Cardiac septum (tissue), 1 donor: ENCODE measurements at regions of chr2 and their contacts with region 1.

Region 1: DNA sequence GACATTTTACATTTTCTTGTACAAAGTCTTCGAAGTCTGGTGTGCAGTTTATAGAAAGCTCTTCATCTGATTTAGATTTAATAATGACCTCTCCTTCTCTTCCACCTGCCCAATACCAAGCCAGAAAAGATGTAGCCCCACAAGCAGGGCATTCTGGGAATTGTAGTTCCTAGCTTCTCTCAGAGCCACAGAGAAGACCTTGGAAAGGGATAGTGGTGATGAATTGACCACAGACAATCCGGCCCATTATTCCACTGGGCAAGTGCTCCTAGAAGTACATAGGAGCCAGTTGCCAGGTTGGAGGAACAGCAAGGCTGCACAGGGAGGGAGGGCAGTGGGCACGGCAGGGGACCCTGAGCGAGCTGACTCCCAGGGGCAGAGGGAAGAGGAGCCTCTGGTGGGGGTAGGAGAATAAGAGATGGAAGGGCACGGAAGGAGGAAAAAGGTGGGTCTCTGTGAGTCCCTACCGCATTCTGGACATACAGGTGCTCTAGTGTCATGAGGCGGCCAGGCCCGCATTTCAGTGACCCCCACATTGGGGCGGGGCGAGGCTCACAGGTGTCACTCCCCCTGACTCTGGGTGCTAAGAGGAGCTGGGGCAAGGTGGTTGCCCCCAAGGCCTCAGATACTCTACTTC is 152.5 kb upstream of the HAAO start:
- DNase-seq: no peak

Region 2: GRCh38 chr2:42404676-42405075 is 540.2 kb before region 1 on chr2:
- intact Hi-C with region 1: no loop called
- DNase-seq: no peak

Region 3: DNA sequence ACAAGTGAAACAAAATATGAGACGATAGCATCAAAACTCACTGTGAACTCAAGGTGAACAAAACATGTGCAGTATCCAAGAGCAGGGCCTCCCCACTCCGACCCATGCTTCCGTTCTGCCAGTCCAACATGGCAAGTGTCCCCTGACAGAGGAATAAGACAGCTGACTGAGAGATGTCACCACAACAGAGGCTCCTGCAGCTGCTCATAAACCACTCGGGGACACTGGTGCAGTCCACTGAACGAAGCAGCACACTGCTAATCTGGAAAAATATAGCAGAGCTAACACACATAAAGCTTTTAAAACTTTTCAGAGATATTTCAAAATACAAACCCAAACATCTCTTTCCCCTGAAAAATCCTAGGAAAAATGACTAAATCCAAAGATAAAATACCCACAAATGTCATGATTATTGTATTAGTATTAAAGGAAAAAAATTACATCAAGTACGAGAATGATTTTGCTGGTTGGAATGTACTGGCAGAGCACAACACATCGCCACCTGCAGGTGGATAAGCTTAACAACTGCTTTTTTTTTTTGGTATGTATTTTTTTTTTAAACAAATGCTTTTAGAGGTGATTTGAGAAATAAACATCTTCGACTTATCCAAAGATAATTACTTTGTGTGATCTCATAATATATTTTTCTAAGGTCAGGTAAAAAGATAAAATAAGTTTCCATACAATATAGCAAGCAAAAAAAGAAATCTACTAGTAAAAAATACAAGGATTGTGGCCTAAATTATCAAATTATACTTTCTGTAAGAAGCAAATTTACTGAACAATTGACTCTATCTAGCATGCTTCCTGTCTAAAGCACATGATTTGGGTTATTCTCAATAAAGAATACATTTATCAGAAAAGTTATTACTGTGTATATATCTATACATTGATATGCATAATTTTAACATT is 632.3 kb after region 1 on chr2:
- intact Hi-C with region 1: loop called (anchors 10 kb)
- DNase-seq: no peak